ENCODE measurements at regions of chr22 and their contacts with region 1.

Region 1: DNA sequence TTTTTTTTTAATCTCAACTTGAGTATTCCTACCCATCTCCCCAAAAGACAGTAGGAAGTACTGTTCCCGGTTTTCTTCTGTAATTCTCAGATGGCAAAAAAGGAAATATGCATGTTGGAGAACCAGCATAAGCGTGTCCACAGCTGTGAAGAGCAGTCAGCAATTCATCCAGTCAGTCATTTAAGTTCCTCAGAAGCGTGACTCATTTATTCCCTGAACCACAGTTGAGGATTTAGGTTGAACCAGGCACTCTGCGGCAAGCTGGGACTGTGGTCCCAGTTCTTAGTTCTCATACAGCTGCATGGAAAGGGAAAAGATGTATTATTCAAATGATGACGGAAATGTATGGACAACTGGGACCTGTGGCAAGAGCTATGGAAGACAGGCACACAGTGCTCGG is 61.0 kb upstream of the MYO18B start:
- DNase-seq: no peak

Region 2: GRCh38 chr22:25623310-25623734 is 57.6 kb before region 1 on chr22:
- intact Hi-C with region 1: loop called (anchors 10 kb)
- DNase-seq: no peak